ENCODE measurements at regions of chr2 and their contacts with region 1.

Region 1: DNA sequence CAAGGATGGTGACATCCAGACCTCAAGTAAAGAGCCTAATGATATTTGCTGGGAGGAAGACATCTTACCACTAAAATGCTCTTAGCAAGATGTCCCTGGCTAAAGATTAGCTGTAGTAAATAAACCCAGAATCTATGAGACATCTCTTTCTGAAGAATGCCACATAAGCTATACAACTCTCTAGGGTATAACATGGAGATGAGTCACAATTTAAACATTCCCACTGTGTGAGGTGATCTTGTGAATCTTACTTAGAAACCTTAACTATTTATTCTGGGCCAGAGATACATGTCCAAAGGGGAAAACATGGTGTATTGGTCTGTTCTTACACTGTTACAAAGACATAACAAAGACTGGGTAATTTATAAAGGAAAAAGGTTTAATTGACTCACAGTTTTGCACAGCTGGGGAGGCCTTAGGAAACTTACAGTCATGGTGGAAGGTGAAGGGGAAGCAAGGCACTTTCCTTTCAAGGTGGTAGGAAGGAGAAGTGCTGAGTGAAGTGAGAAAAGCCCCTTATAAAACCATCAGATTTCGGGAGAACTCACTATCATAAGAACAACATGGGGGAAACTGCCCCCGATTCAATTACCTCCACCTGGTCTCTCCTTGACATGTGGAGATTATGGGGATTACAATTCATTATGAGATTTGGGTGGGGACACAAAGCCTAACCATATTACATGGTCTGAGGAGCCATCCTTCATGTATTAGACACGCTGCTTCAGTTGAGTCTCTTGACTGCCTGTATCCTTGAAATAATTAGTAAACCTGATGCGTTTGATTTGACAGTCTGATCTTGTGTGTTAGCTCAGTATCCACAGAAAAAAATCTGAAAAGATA is 17.1 kb downstream of the KRCC1 start:
- DNase-seq: no peak
- H3K4me3 Mint-ChIP-seq: no peak overlapping the region
- H3K27ac Mint-ChIP-seq: peak overlapping the region; percentile 71
- H3K4me1 Mint-ChIP-seq: peaks cover 26% of the 10 kb centered on the region
- H3K27me3 Mint-ChIP-seq: no peaks in the 10 kb centered on the region

Region 2: GRCh38 chr2:88003074-88003755 is 35.3 kb before region 1 on chr2:
- intact Hi-C with region 1: no loop called
- DNase-seq: no peak
- H3K4me3 Mint-ChIP-seq: no peak overlapping the region
- H3K27ac Mint-ChIP-seq: no peak overlapping the region
- H3K4me1 Mint-ChIP-seq: peaks cover 8% of the 10 kb centered on the region
- H3K27me3 Mint-ChIP-seq: no peaks in the 10 kb centered on the region

Region 3: GRCh38 chr2:88016086-88016959 is 22.2 kb before region 1 on chr2 and contains the start of gene RNU2-63P:
- intact Hi-C with region 1: loop called (anchors 1 kb)
- DNase-seq: peak; percentile 74
- H3K4me3 Mint-ChIP-seq: peak within 1 kb of the TSS; percentile 94
- H3K27ac Mint-ChIP-seq: peak within 1 kb of the TSS; percentile 98
- H3K4me1 Mint-ChIP-seq: peaks cover 14% of the 10 kb centered on the region
- H3K27me3 Mint-ChIP-seq: no peaks in the 10 kb centered on the region
- total RNA-seq, gene RNU2-63P: 19.7 and 21.6 TPM in 2 replicates

Region 4: GRCh38 chr2:88582030-88582429 is 543.5 kb after region 1 on chr2:
- intact Hi-C with region 1: no loop called
- DNase-seq: no peak
- H3K4me3 Mint-ChIP-seq: no peak overlapping the region
- H3K27ac Mint-ChIP-seq: no peak overlapping the region
- H3K4me1 Mint-ChIP-seq: no peaks in the 10 kb centered on the region
- H3K27me3 Mint-ChIP-seq: no peaks in the 10 kb centered on the region

Measured in activated T-helper 2 cell treated with anti-CD3 and anti-CD28 coated beads, Interferon-gamma antibody, Interleukin-2, Interleukin-4, amounts not matched to agents 10 μg/mL and 5 μg/mL and 100 μg/mL, durations not matched to agents 14 hours and 24 hours and 36 hours (primary cell).